Body of pancreas (tissue), 4 donors: ENCODE measurements at regions of chr9 and their contacts with region 1.

Region 1: GRCh38 chr9:101527066-101527465 is 6.6 kb upstream of the RNF20 start:
- DNase-seq: no peak
- ATAC-seq: no peak
- H3K4me3 ChIP-seq: no peak overlapping the region
- H3K27ac ChIP-seq: no peak overlapping the region
- H3K4me1 ChIP-seq: no peaks in the 10 kb centered on the region
- H3K27me3 ChIP-seq: no peaks in the 10 kb centered on the region
- CTCF ChIP-seq: no peak
- POLR2A ChIP-seq: no peak

Region 2: DNA sequence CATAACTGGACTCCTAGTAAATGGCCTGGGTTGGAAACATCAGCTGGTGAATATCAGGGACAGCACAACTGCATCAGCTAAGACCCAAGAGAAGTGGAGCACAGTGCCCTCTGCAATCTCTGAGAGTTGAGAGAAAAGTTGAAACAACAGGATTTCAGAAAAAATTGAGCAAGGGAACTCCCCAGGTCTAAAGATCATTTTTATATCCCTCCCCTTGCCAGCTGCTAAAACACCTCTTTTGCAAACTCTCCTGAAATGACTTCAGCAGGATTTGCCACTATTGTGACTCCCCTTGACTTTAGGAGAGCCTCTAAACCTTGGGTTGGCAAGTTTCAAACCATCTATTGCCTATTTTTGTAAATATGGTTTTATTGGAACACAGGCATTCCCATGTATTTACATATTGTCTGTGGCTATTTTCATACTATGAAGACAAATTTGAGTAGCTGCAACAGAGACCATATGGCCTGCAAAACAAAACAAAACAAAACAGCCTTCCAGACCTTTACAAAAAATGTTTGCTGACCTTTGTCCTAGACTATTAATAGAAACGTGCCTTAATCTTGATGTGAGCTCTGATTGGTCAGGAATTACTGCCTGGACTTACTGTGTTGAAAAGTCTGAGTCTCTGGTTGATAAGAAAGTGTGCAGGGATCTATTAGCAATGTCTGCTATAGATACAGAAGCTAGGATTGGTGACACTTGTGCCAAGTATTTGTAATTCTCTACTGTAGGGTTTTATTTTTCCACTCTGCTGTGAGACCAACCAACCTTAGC is 536.3 kb before region 1 on chr9:
- intact Hi-C with region 1: no loop called
- DNase-seq: no peak
- ATAC-seq: no peak
- H3K4me3 ChIP-seq: no peak overlapping the region
- H3K27ac ChIP-seq: no peak overlapping the region
- H3K4me1 ChIP-seq: peaks cover 5% of the 10 kb centered on the region
- H3K27me3 ChIP-seq: no peaks in the 10 kb centered on the region
- CTCF ChIP-seq: no peak
- POLR2A ChIP-seq: no peak

Region 3: DNA sequence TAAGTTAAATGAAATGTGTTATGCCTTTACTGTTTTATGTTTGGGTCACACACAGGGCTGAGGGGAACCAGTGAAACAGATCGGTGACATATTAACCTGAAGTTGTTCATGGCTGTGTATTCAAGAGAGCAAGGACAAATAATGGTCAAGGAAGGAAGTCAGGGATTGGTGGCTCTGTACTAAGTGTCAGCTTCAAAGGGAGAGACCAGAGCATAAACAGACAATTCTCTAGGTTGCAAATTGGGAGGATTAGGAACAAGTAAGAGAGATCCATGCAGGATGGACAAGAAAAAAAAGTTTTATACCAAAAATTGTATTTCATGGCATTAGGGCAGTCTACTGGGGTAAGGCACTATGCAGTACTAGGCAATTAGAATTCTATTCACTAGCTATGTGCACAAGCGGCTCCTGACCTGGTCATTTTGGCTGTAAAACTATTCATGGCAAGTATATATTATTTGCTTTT is 342.2 kb before region 1 on chr9:
- intact Hi-C with region 1: no loop called
- DNase-seq: no peak
- ATAC-seq: no peak
- H3K4me3 ChIP-seq: no peak overlapping the region
- H3K27ac ChIP-seq: no peak overlapping the region
- H3K4me1 ChIP-seq: no peaks in the 10 kb centered on the region
- H3K27me3 ChIP-seq: no peaks in the 10 kb centered on the region
- CTCF ChIP-seq: no peak
- POLR2A ChIP-seq: no peak

Region 4: GRCh38 chr9:101427957-101428655 is 99.0 kb before region 1 on chr9:
- intact Hi-C with region 1: no loop called
- DNase-seq: no peak
- ATAC-seq: no peak
- H3K4me3 ChIP-seq: no peak overlapping the region
- H3K27ac ChIP-seq: no peak overlapping the region
- H3K4me1 ChIP-seq: peaks cover 12% of the 10 kb centered on the region
- H3K27me3 ChIP-seq: no peaks in the 10 kb centered on the region
- CTCF ChIP-seq: no peak
- POLR2A ChIP-seq: no peak

Region 5: DNA sequence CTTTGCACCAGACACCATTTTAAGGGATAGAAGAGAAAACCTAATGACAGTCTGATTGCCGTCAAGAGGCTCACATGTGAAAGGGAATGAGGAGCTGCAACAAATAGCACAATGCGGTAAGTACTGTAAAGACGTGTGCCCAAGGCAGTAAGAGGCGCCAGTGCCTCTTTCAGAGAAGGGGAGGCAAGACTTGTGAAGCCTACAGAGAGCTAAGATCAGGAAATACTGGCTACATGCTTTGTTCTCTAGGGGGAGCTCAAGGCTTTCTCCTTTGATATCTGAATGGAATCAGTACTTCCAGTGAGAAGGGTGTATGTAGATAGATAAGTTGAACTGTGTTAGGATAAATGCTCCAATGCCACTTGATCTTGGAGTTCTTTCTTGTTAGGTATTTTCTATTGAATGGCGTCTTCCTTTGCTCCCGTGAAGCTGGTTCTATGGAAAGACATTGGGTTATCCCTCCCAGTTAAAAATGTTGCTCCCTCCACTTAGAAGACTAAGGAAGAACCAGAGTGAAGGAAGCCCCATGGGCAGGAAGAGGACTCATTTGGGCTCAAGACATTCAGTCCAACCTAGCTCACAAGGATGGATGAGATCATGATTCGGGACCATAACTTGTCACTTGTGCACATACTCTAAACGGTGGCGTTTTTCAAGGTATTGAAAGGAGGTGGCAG is 68.0 kb before region 1 on chr9:
- intact Hi-C with region 1: loop called (anchors 5 kb)
- DNase-seq: peak in 3 of 4 donors; percentile 26 to 69 (median 34)
- ATAC-seq: peak; percentile 97
- H3K4me3 ChIP-seq: no peak overlapping the region
- H3K27ac ChIP-seq: no peak overlapping the region
- H3K4me1 ChIP-seq: no peaks in the 10 kb centered on the region
- H3K27me3 ChIP-seq: no peaks in the 10 kb centered on the region
- CTCF ChIP-seq: peak; percentile 51 to 87 (median 80)
- POLR2A ChIP-seq: no peak

Region 6: DNA sequence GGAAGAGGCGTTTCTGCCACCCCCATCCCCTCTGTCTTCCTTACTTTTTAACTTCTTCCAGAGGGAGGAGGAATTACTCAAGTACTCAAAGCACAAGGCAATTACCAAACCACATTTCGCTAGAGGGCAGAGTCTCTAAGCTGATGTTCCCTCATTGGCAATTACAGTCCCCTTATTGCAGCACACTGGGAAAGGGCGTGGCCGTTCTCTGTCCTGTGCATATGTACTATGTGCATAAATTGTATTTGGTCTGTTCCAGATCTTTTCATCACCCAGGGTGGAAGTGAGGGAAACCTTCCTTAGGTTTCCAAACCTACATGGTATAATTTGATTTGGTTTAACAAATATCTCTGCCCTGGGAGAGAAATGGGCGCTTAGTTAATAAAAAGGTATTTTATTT is 61.7 kb before region 1 on chr9:
- intact Hi-C with region 1: loop called (anchors 5 kb)
- DNase-seq: peak; percentile 52 to 71 (median 64)
- ATAC-seq: peak; percentile 77
- H3K4me3 ChIP-seq: no peak overlapping the region
- H3K27ac ChIP-seq: no peak overlapping the region
- H3K4me1 ChIP-seq: peaks cover 6% of the 10 kb centered on the region
- H3K27me3 ChIP-seq: no peaks in the 10 kb centered on the region
- CTCF ChIP-seq: peak; percentile 14 to 68 (median 54)
- POLR2A ChIP-seq: no peak

Region 7: DNA sequence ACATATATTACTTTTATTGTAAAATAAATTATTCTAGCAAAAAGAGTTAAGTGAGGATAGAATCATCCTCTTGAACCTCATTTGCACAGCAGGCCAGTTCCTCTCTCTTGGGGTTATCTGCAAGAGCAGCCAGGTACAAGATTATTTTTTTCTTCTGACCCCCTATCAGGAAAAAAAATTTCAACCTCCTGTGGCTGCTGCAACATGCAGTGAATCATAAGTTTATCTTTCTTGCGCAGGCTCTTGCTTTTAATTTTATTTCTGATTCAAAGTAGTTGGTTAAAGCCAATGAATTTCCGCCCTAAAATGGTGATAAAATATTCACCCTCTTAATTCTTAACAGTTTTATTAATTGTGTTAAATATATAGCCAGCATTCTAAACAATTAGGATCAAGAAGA is 137.4 kb after region 1 on chr9:
- intact Hi-C with region 1: no loop called
- DNase-seq: no peak
- ATAC-seq: no peak
- H3K4me3 ChIP-seq: no peak overlapping the region
- H3K27ac ChIP-seq: no peak overlapping the region
- H3K4me1 ChIP-seq: no peaks in the 10 kb centered on the region
- H3K27me3 ChIP-seq: no peaks in the 10 kb centered on the region
- CTCF ChIP-seq: no peak
- POLR2A ChIP-seq: no peak